Dorsolateral prefrontal cortex (tissue), 120 donors: ENCODE measurements at regions of chr17 and their contacts with region 1.

Region 1: GRCh38 chr17:44199553-44200477 is at the start of gene ATXN7L3:
- DNase-seq: peak; percentile 95 to 98 (median 96)
- H3K4me3 ChIP-seq: peak within 1 kb of the TSS; percentile 58 to 95 (median 81)
- H3K27ac ChIP-seq: peak within 1 kb of the TSS; percentile 81 to 99 (median 94)
- H3K27me3 ChIP-seq: no peaks in the 10 kb centered on the region
- CTCF ChIP-seq: peak in 16 of 56 donors; percentile 12 to 38 (median 25)
- total RNA-seq, gene ATXN7L3: 95.4 to 294 (median 207) TPM

Region 2: GRCh38 chr17:43562679-43563599 is 636.9 kb before region 1 on chr17:
- intact Hi-C with region 1: no loop called
- DNase-seq: no peak
- H3K4me3 ChIP-seq: no peak overlapping the region
- H3K27ac ChIP-seq: no peak overlapping the region
- H3K27me3 ChIP-seq: no peaks in the 10 kb centered on the region
- CTCF ChIP-seq: no peak

Region 3: GRCh38 chr17:44186307-44187130 is 13.3 kb before region 1 on chr17 and contains the start of gene TMUB2:
- intact Hi-C with region 1: loop called in 1 of 2 experiments (anchors 1 kb)
- DNase-seq: peak; percentile 99 to 100 (median 99)
- H3K4me3 ChIP-seq: peak within 1 kb of the TSS; percentile 68 to 100 (median 94)
- H3K27ac ChIP-seq: peak within 1 kb of the TSS; percentile 69 to 100 (median 98)
- H3K27me3 ChIP-seq: no peaks in the 10 kb centered on the region
- CTCF ChIP-seq: peak in 26 of 56 donors; percentile 1 to 55 (median 23)
- total RNA-seq, gene TMUB2: 25.4 to 51.8 (median 37.8) TPM

Region 4: DNA sequence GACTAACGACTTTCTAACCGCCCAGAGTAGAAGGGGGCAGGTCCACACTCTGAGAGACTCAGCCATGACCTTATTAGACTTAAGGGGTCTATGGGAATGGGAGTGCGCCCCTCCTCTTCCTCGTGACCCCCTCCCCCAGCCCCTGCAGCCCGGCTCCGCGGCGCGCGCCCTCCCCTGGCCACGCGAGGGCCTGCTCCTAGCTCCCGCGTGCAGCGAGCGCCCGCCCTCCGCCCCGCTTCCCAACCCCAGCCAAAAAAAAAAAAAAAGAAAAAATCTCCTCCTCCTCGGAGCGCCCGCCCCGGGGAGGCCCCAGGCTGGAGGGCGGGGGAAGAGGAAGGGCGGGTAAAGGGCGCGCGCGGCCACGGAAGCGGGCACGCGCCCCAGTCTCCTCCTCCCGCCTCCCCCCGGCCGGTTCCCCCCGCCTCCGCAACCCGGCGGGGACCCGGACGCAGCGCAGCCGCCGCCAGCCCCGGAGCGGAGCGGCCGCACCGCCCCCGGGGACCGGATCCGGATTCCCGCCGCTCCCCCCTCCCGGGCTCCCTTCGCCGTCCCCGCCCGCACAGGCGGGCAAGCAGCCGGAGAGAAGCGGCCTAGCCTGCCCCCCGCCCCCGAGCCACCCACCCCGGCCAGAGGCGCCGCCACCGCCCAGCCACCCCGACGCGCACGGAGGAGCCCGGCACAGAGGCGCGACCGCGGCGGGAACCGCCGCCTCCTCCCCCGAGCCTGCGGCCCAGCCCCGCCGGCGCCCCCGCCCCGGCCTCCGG is 18.7 kb after region 1 on chr17:
- intact Hi-C with region 1: loop called (anchors 1 to 2 kb)
- DNase-seq: peak; percentile 68 to 91 (median 82)
- H3K4me3 ChIP-seq: peak overlapping the region; percentile 46 to 95 (median 88)
- H3K27ac ChIP-seq: peak overlapping the region; percentile 71 to 100 (median 99)
- H3K27me3 ChIP-seq: no peaks in the 10 kb centered on the region
- CTCF ChIP-seq: peak; percentile 31 to 83 (median 68)

Region 5: GRCh38 chr17:44247440-44247841 is 47.6 kb after region 1 on chr17:
- intact Hi-C with region 1: no loop called
- DNase-seq: no peak
- H3K4me3 ChIP-seq: no peak overlapping the region
- H3K27ac ChIP-seq: no peak overlapping the region
- H3K27me3 ChIP-seq: no peaks in the 10 kb centered on the region
- CTCF ChIP-seq: no peak

Region 6: DNA sequence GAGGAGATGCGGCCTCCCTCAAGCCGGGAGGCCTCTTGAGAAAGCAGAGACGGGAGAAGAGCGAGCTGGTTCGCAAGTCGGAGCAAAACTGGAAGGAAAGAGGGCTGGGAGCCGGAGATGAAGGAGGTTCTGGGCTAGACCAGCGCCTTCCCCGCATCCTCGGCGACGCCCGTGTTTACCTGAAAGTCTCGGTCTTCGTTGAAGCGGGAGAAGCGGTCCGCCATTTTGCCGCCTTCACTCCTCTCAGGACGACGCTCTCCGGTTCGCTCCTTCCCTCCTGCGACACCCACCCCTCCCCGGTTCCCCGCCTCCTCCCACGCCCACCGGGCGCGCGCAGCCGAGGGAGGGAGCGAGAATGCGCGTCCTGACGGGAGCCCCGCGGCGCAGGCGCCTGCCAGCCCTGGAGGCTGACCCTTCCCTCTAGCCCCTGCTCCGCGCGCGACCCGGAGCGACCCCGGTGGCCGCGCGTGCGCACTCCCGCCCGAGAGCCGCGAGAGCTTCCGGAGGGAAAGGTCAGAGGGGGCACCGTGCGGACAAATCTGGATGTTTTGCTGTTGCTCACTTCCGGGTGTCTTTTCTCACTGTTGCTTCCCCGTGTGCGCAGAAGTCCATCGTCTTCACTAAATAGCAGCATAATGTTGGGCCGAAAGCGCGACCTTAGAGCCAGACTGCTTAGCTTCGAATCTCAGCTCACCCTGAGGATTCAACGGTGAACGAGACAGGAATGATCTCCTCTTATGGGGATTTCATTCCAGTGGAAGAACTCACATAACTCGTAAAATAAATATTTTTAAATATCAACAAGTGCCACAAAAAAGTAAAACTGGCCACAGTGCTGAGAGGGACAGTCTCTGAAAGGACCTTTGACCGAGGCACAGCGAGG is 303.6 kb after region 1 on chr17 and contains the start of gene GPATCH8:
- intact Hi-C with region 1: loop called in 1 of 2 experiments (anchors 10 kb)
- DNase-seq: peak; percentile 84 to 97 (median 86)
- H3K4me3 ChIP-seq: peak within 1 kb of the TSS; percentile 63 to 99 (median 92)
- H3K27ac ChIP-seq: peak within 1 kb of the TSS; percentile 13 to 96 (median 89)
- H3K27me3 ChIP-seq: peaks cover 0 to 9% (median 0%) of the 10 kb centered on the region in 45 donors
- CTCF ChIP-seq: peak in 33 of 56 donors; percentile 2 to 52 (median 24)
- total RNA-seq, gene GPATCH8: 53.8 to 111 (median 82.5) TPM